ENCODE measurements at regions of chr1 and their contacts with region 1.

Region 1: GRCh38 chr1:226121587-226122400 is 59.3 kb downstream of the H3-3A start:
- DNase-seq: peak; percentile 68 to 86 (median 81)
- H3K4me3 ChIP-seq: peak overlapping the region; percentile 39 to 84 (median 72)
- H3K27ac ChIP-seq: peak overlapping the region in 1 of 2 experiments; percentile 14
- H3K4me1 ChIP-seq: peaks cover 0 to 27% (median 25%) of the 10 kb centered on the region in 4 experiments
- H3K27me3 ChIP-seq: no peaks in the 10 kb centered on the region

Region 2: DNA sequence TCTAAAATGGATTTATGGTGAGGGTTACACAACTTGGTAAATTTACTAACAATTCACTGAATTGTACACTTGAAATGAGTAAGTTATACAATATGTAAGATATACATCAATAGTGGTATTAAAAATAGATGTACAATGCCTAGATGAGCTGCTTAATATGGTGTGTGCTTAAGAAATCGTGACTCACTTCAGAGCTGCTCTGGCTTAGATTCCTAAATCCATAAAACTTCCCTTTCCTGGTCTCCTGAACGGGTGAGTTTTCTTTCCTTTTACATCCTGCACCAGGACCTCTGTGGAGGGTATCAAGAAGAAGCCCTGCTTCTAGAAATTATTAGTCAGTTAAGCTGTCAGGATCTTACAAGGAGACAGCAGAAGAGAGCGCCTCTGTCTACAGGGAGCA is 28.8 kb before region 1 on chr1:
- CTCF ChIA-PET with region 1: interaction called, 20 read pairs
- POLR2A ChIA-PET with region 1: no interaction called
- DNase-seq: no peak
- H3K4me3 ChIP-seq: no peak overlapping the region
- H3K27ac ChIP-seq: no peak overlapping the region
- H3K4me1 ChIP-seq: no peaks in the 10 kb centered on the region
- H3K27me3 ChIP-seq: no peaks in the 10 kb centered on the region

Region 3: GRCh38 chr1:226109829-226110248 is 12.0 kb before region 1 on chr1:
- CTCF ChIA-PET with region 1: interaction called, 43 read pairs
- POLR2A ChIA-PET with region 1: interaction called, 8 read pairs
- DNase-seq: peak; percentile 85 to 94 (median 92)
- H3K4me3 ChIP-seq: peak overlapping the region; percentile 65 to 87 (median 69)
- H3K27ac ChIP-seq: peak overlapping the region; percentile 54 to 81
- H3K4me1 ChIP-seq: peaks cover 2 to 24% (median 20%) of the 10 kb centered on the region in 4 experiments
- H3K27me3 ChIP-seq: no peaks in the 10 kb centered on the region

Region 4: GRCh38 chr1:226149806-226150205 is 28.0 kb after region 1 on chr1:
- CTCF ChIA-PET with region 1: interaction called, 27 read pairs
- POLR2A ChIA-PET with region 1: no interaction called
- DNase-seq: peak; percentile 36 to 74 (median 62)
- H3K4me3 ChIP-seq: no peak overlapping the region
- H3K27ac ChIP-seq: no peak overlapping the region
- H3K4me1 ChIP-seq: no peaks in the 10 kb centered on the region
- H3K27me3 ChIP-seq: no peaks in the 10 kb centered on the region

Region 5: GRCh38 chr1:226186124-226187018 is 64.6 kb after region 1 on chr1 and contains the start of gene ACBD3:
- CTCF ChIA-PET with region 1: interaction called, 44 read pairs
- POLR2A ChIA-PET with region 1: no interaction called
- DNase-seq: peak; percentile 86 to 93 (median 90)
- H3K4me3 ChIP-seq: peak within 1 kb of the TSS; percentile 41 to 95 (median 93)
- H3K27ac ChIP-seq: peak within 1 kb of the TSS; percentile 68 to 87
- H3K4me1 ChIP-seq: peaks cover 17 to 37% (median 30%) of the 10 kb centered on the region in 4 experiments
- H3K27me3 ChIP-seq: no peaks in the 10 kb centered on the region

Region 6: DNA sequence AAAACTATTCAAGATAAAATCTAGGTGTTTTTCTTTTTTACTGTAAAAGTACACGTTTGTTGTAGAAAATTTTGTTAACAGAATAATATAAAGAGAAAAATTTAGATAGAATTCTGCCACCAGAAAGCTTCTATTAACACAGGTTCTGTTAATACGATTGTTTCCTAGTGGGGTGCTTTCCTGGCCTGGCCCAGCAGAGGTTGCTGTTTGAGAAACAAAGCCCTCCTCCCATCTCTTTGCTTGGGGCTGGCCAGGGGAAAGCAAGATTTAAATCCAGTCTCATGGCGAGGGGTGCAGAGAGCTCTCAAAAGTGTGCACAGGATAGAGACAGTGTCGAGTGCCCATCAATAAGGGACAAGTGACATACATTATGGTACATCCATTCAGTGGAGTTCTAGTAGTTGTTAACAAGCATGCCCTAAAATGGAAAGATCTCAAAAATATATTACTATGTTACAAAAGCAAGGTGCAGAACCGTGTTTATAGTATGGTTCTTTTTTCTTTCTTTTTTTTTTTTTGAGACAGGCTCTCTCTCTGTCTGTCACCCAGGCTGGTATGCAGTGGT is 79.3 kb after region 1 on chr1:
- CTCF ChIA-PET with region 1: interaction called, 89 read pairs
- POLR2A ChIA-PET with region 1: interaction called, 5 read pairs
- DNase-seq: peak; percentile 33 to 55 (median 54)
- H3K4me3 ChIP-seq: no peak overlapping the region
- H3K27ac ChIP-seq: no peak overlapping the region
- H3K4me1 ChIP-seq: peaks cover 0 to 3% (median 0%) of the 10 kb centered on the region in 4 experiments
- H3K27me3 ChIP-seq: no peaks in the 10 kb centered on the region

Measured in common myeloid progenitor, CD34-positive (primary cell).